ENCODE measurements at regions of chr17 and their contacts with region 1.

Region 1: DNA sequence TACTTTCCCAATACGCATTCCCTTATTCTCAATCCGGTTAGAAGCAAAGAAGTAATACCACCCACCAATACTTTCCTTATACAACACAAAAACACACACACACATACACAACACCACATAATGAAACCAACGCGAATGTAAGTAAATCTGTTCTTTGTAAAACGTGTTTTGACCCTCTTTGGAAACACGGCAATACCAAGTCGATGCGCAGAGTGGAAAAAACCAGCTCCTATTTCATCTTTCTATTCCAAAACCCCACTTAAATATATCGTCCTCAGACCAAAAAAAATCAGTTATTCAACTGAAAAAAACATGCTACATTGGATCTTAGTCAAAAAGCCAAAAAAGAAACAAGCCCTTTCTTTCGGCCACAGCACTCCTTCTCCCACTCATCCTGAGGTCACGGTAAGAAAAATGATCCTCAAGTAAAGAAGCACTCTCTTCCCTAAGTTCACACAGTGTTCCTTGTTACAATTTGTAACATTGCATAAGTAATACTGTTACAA is 31.0 kb upstream of the ARL4D start:
- DNase-seq: peak in 1 of 5 donors; percentile 86
- H3K4me3 ChIP-seq: peak overlapping the region; percentile 79
- H3K4me3 Mint-ChIP-seq: peak overlapping the region; percentile 90 to 98 (median 95)
- H3K27ac ChIP-seq: peak overlapping the region; percentile 96
- H3K27ac Mint-ChIP-seq: peak overlapping the region; percentile 98 to 100 (median 100)
- H3K4me1 ChIP-seq: peaks cover 22% of the 10 kb centered on the region
- H3K4me1 Mint-ChIP-seq: peaks cover 24 to 34% (median 30%) of the 10 kb centered on the region in 3 donors
- H3K27me3 ChIP-seq: no peaks in the 10 kb centered on the region
- H3K27me3 Mint-ChIP-seq: peaks cover 0 to 1% of the 10 kb centered on the region in 2 donors

Region 2: DNA sequence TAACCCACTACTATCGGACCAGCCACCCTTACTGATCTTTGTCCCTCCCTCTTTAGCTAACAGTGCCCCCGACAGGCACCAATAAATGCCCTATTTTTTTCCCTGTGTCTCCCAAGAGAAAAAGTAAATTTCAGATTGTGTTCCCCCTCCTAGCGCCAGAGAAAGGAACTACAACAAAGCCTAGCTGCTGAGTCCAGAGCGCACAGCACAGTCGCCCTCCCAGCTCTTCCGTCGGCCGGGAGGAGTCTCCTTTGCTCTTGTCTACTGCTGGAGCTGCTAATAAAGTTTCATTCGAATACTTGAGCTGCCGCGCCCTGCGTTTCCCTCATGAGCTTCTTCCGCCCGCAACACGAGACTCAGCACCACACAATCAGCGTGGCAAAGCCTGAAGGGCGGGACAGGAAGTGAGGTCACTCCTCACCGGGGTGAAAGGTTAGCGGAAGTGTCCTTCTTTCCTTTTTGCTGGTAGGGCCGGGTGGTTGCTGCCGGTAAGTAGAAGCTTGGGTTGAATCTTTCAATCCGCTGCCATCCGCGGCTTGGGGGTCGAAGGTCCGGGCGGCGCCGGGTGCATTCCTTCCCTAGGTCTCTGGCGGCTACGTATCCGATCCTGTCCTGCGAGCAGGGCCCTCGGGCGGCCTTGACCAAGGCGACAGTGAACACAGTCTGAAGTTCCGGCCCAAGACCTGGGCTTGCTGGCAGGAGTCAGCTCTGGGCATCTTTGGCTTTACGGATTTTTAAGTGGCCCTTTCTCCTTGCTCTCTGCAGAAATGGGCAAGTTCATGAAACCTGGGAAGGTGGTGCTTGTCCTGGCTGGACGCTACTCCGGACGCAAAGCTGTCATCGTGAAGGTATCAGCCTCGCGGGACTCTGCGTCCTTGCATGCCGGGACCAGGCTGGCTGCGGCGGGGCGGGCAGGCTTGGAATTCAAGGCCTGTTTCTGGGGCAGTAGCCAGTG is 369.5 kb before region 1 on chr17 and contains the start of gene RPL27:
- CTCF ChIA-PET with region 1: interaction called, 3 read pairs
- POLR2A ChIA-PET with region 1: interaction called, 12 read pairs
- DNase-seq: peak; percentile 92 to 99 (median 97)
- H3K4me3 ChIP-seq: peak within 1 kb of the TSS; percentile 90
- H3K4me3 Mint-ChIP-seq: peak within 1 kb of the TSS; percentile 79 to 97 (median 96)
- H3K27ac ChIP-seq: peak within 1 kb of the TSS; percentile 94
- H3K27ac Mint-ChIP-seq: peak within 1 kb of the TSS; percentile 89 to 100 (median 99)
- H3K4me1 ChIP-seq: peaks cover 22% of the 10 kb centered on the region
- H3K4me1 Mint-ChIP-seq: peaks cover 22 to 31% (median 29%) of the 10 kb centered on the region in 3 donors
- H3K27me3 ChIP-seq: no peaks in the 10 kb centered on the region
- H3K27me3 Mint-ChIP-seq: no peaks in the 10 kb centered on the region
- total RNA-seq, gene RPL27: 1,412 to 1,428 TPM

Region 3: DNA sequence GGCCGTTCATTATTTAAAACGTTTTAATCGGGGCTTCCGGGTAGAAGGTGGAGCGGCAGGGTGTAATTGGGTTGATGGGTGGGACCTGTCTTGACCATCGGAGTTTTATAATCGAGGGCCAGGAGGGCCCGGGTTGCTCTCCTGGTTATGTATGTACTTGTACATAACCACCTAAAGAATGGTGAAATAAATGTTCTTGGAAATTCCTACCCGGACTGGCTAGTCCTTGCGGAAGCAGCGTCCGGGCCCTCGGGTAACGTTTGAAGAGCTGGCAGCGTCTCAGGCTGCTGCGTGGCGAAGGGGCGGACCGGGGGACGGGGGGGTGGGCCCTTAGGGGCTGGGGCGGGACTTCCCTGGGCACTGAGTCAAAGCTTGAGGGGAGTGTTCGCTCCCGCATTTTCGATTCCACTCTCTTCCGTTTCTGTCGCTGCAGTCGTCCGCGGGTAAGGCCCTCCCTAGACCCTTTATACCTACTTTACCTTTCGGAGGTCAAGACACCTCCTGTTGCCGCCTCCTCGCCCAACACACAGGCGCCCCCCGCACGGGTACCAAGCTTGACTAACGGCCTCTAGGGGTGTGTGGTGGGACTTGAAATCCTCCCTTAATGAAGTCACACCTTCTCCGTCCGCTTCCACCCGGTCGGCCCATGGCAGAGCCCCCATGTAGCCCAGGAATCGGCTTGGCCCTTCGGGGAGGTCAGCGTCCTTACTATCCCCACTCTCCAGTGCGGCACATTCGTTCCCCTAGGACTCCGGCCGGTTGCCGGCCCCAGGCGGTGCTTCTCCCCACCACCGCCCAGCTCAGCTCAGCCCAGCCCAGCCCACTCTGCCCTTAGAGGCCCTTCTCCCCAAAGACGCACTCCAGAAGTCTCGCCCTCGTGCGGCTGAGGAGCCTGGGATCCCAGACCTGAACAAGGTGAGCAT is 156.0 kb before region 1 on chr17 and contains the start of gene TMEM106A:
- CTCF ChIA-PET with region 1: interaction called, 3 read pairs
- POLR2A ChIA-PET with region 1: interaction called, 24 read pairs
- DNase-seq: peak; percentile 64 to 84 (median 69)
- H3K4me3 ChIP-seq: peak within 1 kb of the TSS; percentile 79
- H3K4me3 Mint-ChIP-seq: peak within 1 kb of the TSS; percentile 83 to 100 (median 96)
- H3K27ac ChIP-seq: peak within 1 kb of the TSS; percentile 76
- H3K27ac Mint-ChIP-seq: peak within 1 kb of the TSS; percentile 59 to 98 (median 96)
- H3K4me1 ChIP-seq: peaks cover 23% of the 10 kb centered on the region
- H3K4me1 Mint-ChIP-seq: peaks cover 34 to 54% (median 44%) of the 10 kb centered on the region in 3 donors
- H3K27me3 ChIP-seq: no peaks in the 10 kb centered on the region
- H3K27me3 Mint-ChIP-seq: no peaks in the 10 kb centered on the region
- total RNA-seq, gene TMEM106A: 8.8 to 10.2 TPM

Region 4: GRCh38 chr17:43378766-43379165 is 11.0 kb after region 1 on chr17:
- CTCF ChIA-PET with region 1: interaction called, 3 read pairs
- POLR2A ChIA-PET with region 1: interaction called, 11 read pairs
- DNase-seq: no peak
- H3K4me3 ChIP-seq: no peak overlapping the region
- H3K4me3 Mint-ChIP-seq: no peak overlapping the region
- H3K27ac ChIP-seq: no peak overlapping the region
- H3K27ac Mint-ChIP-seq: no peak overlapping the region
- H3K4me1 ChIP-seq: no peaks in the 10 kb centered on the region
- H3K4me1 Mint-ChIP-seq: peaks cover 0 to 3% (median 0%) of the 10 kb centered on the region in 3 donors
- H3K27me3 ChIP-seq: no peaks in the 10 kb centered on the region
- H3K27me3 Mint-ChIP-seq: peaks cover 0 to 2% of the 10 kb centered on the region in 2 donors

Region 5: GRCh38 chr17:43393944-43394482 is 26.2 kb after region 1 on chr17:
- CTCF ChIA-PET with region 1: interaction called, 20 read pairs
- POLR2A ChIA-PET with region 1: interaction called, 139 read pairs
- DNase-seq: peak; percentile 78 to 91 (median 85)
- H3K4me3 ChIP-seq: no peak overlapping the region
- H3K4me3 Mint-ChIP-seq: peak overlapping the region in 1 of 7 donors; percentile 76
- H3K27ac ChIP-seq: no peak overlapping the region
- H3K27ac Mint-ChIP-seq: peak overlapping the region in 5 of 8 donors; percentile 5 to 78 (median 52)
- H3K4me1 ChIP-seq: peaks cover 23% of the 10 kb centered on the region
- H3K4me1 Mint-ChIP-seq: peaks cover 27 to 35% (median 31%) of the 10 kb centered on the region in 3 donors
- H3K27me3 ChIP-seq: no peaks in the 10 kb centered on the region
- H3K27me3 Mint-ChIP-seq: no peaks in the 10 kb centered on the region